ENCODE measurements at regions of chr17 and their contacts with region 1.

Region 1: GRCh38 chr17:43946069-43946696 is 3.9 kb upstream of the PPY start:
- DNase-seq: no peak
- H3K4me3 ChIP-seq: no peak overlapping the region
- CTCF ChIP-seq: no peak

Region 2: GRCh38 chr17:43927060-43927864 is 18.9 kb before region 1 on chr17:
- CTCF ChIA-PET with region 1: interaction called, 49 read pairs
- POLR2A ChIA-PET with region 1: no interaction called
- DNase-seq: no peak
- H3K4me3 ChIP-seq: no peak overlapping the region; the same call in 1 of the 2 replicates
- CTCF ChIP-seq: no peak

Region 3: GRCh38 chr17:43966271-43966670 is 20.1 kb after region 1 on chr17:
- CTCF ChIA-PET with region 1: interaction called, 35 read pairs
- POLR2A ChIA-PET with region 1: no interaction called
- DNase-seq: no peak
- H3K4me3 ChIP-seq: no peak overlapping the region
- CTCF ChIP-seq: no peak

Region 4: DNA sequence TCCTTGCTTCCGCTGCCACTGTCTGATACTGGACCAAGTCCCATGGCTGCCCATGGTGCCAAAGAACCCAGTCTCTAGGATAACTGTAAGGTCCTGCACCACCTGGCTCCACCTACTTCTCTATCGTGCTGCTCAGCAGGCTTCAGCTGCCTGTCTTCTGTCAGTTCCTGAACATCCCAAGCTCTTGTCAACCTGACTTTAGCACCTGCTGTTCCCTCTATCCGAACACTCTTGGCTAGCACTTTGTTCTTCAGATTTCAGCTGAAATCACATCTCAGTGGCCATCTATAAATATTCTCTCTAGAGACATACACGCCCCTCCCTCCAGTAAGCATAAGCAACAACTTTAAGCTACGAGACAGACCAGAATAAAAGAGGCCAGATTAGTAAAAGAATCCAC is 83.6 kb after region 1 on chr17:
- CTCF ChIA-PET with region 1: interaction called, 12 read pairs
- POLR2A ChIA-PET with region 1: no interaction called
- DNase-seq: no peak
- H3K4me3 ChIP-seq: no peak overlapping the region
- CTCF ChIP-seq: no peak